Transverse colon (tissue), 4 donors: ENCODE measurements at regions of chr1 and their contacts with region 1.

Region 1: GRCh38 chr1:165914136-165914798 is 86.9 kb downstream of the UCK2 start:
- DNase-seq: peak; percentile 78
- H3K4me3 ChIP-seq: no peak overlapping the region
- H3K27ac ChIP-seq: no peak overlapping the region
- H3K4me1 ChIP-seq: peaks cover 0 to 42% (median 19%) of the 10 kb centered on the region in 4 donors
- H3K27me3 ChIP-seq: no peaks in the 10 kb centered on the region
- CTCF ChIP-seq: peak; percentile 78 to 94 (median 86)
- EP300 ChIP-seq: no peak
- POLR2A ChIP-seq: no peak

Region 2: GRCh38 chr1:165392634-165393571 is 521.4 kb before region 1 on chr1:
- in situ Hi-C with region 1: loop called (anchors 10 to 25 kb)
- intact Hi-C with region 1: loop called (anchors 10 kb)
- DNase-seq: peak; percentile 85
- H3K4me3 ChIP-seq: peak overlapping the region in 1 of 4 donors; percentile 32
- H3K27ac ChIP-seq: no peak overlapping the region
- H3K4me1 ChIP-seq: peaks cover 0 to 9% (median 2%) of the 10 kb centered on the region in 4 donors
- H3K27me3 ChIP-seq: peaks cover 33% of the 10 kb centered on the region
- CTCF ChIP-seq: peak; percentile 85 to 95 (median 91)
- EP300 ChIP-seq: no peak
- POLR2A ChIP-seq: no peak

Region 3: GRCh38 chr1:165707984-165708706 is 206.1 kb before region 1 on chr1:
- in situ Hi-C with region 1: loop called in 3 of 4 experiments (anchors 5 to 25 kb)
- intact Hi-C with region 1: loop called (anchors 10 kb)
- DNase-seq: no peak
- H3K4me3 ChIP-seq: no peak overlapping the region
- H3K27ac ChIP-seq: no peak overlapping the region
- H3K4me1 ChIP-seq: no peaks in the 10 kb centered on the region
- H3K27me3 ChIP-seq: peaks cover 6% of the 10 kb centered on the region
- CTCF ChIP-seq: no peak
- EP300 ChIP-seq: no peak
- POLR2A ChIP-seq: no peak

Region 4: GRCh38 chr1:165717918-165718515 is 196.2 kb before region 1 on chr1:
- in situ Hi-C with region 1: loop called in 3 of 4 experiments (anchors 5 to 25 kb)
- intact Hi-C with region 1: loop called (anchors 10 kb)
- DNase-seq: peak; percentile 60
- H3K4me3 ChIP-seq: no peak overlapping the region
- H3K27ac ChIP-seq: no peak overlapping the region
- H3K4me1 ChIP-seq: no peaks in the 10 kb centered on the region
- H3K27me3 ChIP-seq: no peaks in the 10 kb centered on the region
- CTCF ChIP-seq: peak; percentile 51 to 76 (median 65)
- EP300 ChIP-seq: no peak
- POLR2A ChIP-seq: no peak

Region 5: DNA sequence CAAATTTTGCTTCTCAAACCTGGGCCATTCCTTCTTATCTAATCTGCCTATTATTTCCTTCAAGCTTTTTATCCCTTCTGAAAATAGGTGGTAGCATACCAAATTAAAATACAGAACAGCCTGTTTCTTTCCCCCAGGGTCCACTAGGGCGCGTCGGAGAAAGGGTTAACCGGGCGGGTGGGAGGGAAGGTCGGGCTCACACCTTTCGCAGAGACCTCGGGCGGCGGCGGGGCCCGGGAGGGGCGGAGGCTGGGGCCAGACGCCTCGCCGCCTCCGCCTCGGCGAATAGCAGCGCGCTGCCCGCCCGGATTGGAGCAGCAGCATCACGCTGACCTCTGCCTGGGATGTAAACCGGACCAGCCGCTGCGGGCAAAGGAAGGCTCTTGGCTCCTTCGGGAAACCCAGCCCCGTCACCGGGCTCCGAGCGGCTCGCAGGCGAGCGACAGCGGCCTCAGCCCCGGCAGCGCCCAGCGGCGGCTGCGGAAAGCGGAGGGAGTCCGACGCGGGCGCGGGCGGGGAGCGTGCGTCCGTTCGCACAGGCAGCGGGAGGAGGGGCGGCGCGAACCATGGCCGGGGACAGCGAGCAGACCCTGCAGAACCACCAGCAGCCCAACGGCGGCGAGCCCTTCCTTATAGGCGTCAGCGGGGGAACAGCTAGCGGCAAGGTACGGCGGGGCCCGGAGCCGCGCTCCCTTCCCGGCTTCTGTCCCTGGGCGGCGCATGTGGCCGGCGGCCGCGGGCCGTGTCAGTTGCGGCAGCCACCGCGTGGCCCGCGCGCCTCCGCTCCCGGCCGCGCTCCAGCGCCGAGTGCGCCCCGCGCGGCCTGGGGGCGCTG is 86.8 kb before region 1 on chr1 and contains the start of gene UCK2:
- in situ Hi-C with region 1: no loop called
- intact Hi-C with region 1: loop called (anchors 10 kb)
- DNase-seq: peak; percentile 87
- H3K4me3 ChIP-seq: peak within 1 kb of the TSS; percentile 64 to 94 (median 84)
- H3K27ac ChIP-seq: peak within 1 kb of the TSS; percentile 92 to 97 (median 96)
- H3K4me1 ChIP-seq: peaks cover 6 to 18% (median 14%) of the 10 kb centered on the region in 4 donors
- H3K27me3 ChIP-seq: no peaks in the 10 kb centered on the region
- CTCF ChIP-seq: peak in 2 of 5 experiments; percentile 9 to 32
- EP300 ChIP-seq: no peak
- POLR2A ChIP-seq: peak; percentile 68
- total RNA-seq, gene UCK2: 18.9 to 96.5 (median 69.7) TPM

Region 6: GRCh38 chr1:165949335-165950130 is 35.3 kb after region 1 on chr1:
- in situ Hi-C with region 1: no loop called
- intact Hi-C with region 1: no loop called
- DNase-seq: no peak
- H3K4me3 ChIP-seq: no peak overlapping the region
- H3K27ac ChIP-seq: no peak overlapping the region
- H3K4me1 ChIP-seq: no peaks in the 10 kb centered on the region
- H3K27me3 ChIP-seq: no peaks in the 10 kb centered on the region
- CTCF ChIP-seq: no peak
- EP300 ChIP-seq: no peak
- POLR2A ChIP-seq: no peak

Region 7: DNA sequence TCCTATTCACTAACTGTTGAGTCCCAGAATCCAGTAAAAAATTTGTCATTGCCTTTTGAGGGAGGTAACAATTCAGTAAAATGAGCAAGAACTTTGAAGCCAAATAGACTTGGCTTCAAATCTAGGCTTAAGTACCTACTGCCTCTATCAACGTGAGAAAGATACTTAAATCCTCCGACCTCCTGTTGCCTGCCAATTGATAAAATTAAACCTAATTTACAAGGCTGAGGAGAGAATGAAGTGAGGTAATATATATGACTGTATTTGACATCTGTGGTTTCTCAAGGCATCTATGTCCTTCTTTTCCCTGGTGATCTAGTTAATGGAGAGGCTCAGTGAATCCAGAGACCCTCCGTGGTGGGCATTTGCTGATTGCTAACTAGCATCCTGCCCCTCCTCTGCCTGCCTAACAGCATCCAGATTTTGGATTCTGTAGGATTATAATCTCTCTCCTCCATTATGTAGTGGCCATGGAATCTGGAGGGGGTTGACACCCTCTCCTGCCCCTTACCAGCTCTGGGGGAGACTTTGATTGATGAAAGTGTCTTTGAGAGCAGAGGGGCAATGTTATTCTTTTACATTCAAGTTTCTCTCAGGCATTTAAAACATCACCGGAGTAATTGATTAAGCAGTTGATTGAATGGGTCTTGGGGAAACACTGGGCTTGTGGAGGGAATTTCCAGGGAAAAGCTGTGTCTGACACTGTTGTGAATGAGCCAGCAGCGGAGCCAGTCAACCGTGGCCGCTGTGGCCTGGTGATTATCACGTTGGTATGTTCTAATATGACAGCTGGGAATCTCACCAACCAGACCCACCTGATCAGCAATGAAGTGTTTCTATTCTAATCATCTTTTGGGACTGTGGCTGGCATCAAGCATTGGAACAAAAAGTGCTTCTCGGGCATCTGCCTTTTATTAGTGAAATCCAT is 393.3 kb after region 1 on chr1:
- in situ Hi-C with region 1: no loop called
- intact Hi-C with region 1: no loop called
- DNase-seq: no peak
- H3K4me3 ChIP-seq: no peak overlapping the region
- H3K27ac ChIP-seq: no peak overlapping the region
- H3K4me1 ChIP-seq: no peaks in the 10 kb centered on the region
- H3K27me3 ChIP-seq: no peaks in the 10 kb centered on the region
- CTCF ChIP-seq: no peak
- EP300 ChIP-seq: no peak
- POLR2A ChIP-seq: no peak